ENCODE measurements at regions of chr11 and their contacts with region 1.

Region 1: GRCh38 chr11:747158-748006 is at the start of gene TALDO1:
- DNase-seq: peak; percentile 90
- ATAC-seq: peak; percentile 97
- H3K4me3 ChIP-seq: peak within 1 kb of the TSS; percentile 56 to 88 (median 73)
- H3K4me3 Mint-ChIP-seq: peak within 1 kb of the TSS; percentile 88
- H3K27ac ChIP-seq: peak within 1 kb of the TSS; percentile 31 to 77
- H3K27ac Mint-ChIP-seq: peak within 1 kb of the TSS; percentile 83
- H3K4me1 ChIP-seq: peaks cover 17 to 27% of the 10 kb centered on the region in 2 donors
- H3K4me1 Mint-ChIP-seq: peaks cover 16% of the 10 kb centered on the region
- H3K27me3 ChIP-seq: no peaks in the 10 kb centered on the region
- H3K27me3 Mint-ChIP-seq: no peaks in the 10 kb centered on the region
- CTCF ChIP-seq: no peak
- total RNA-seq, gene TALDO1: 105 and 116 TPM in 2 replicates

Region 2: GRCh38 chr11:560305-561147 is 186.9 kb before region 1 on chr11 and contains the starts of genes LMNTD2 and RASSF7:
- CTCF ChIA-PET with region 1: no interaction called
- POLR2A ChIA-PET with region 1: no interaction called
- intact Hi-C with region 1: loop called (anchors 5 kb)
- DNase-seq: peak; percentile 95
- ATAC-seq: peak; percentile 97
- H3K4me3 ChIP-seq: peak within 1 kb of the TSS; percentile 15 to 70 (median 66)
- H3K4me3 Mint-ChIP-seq: peak within 1 kb of the TSS; percentile 88
- H3K27ac ChIP-seq: peak within 1 kb of the TSS; percentile 75 to 89
- H3K27ac Mint-ChIP-seq: peak within 1 kb of the TSS; percentile 83
- H3K4me1 ChIP-seq: peaks cover 14 to 29% of the 10 kb centered on the region in 2 donors
- H3K4me1 Mint-ChIP-seq: peaks cover 16% of the 10 kb centered on the region
- H3K27me3 ChIP-seq: peaks cover 0 to 8% (median 2%) of the 10 kb centered on the region in 4 experiments
- H3K27me3 Mint-ChIP-seq: no peaks in the 10 kb centered on the region
- CTCF ChIP-seq: no peak
- total RNA-seq, gene LMNTD2: 19.7 and 21.4 TPM in 2 replicates
- total RNA-seq, gene RASSF7: 24.7 and 29.8 TPM in 2 replicates

Region 3: GRCh38 chr11:727859-728748 is 19.3 kb before region 1 on chr11:
- CTCF ChIA-PET with region 1: interaction called, 10 read pairs
- POLR2A ChIA-PET with region 1: no interaction called
- intact Hi-C with region 1: loop called (anchors 2 kb)
- DNase-seq: peak; percentile 85
- ATAC-seq: peak; percentile 85
- H3K4me3 ChIP-seq: no peak overlapping the region
- H3K4me3 Mint-ChIP-seq: no peak overlapping the region
- H3K27ac ChIP-seq: no peak overlapping the region
- H3K27ac Mint-ChIP-seq: no peak overlapping the region
- H3K4me1 ChIP-seq: peaks cover 14 to 29% of the 10 kb centered on the region in 2 donors
- H3K4me1 Mint-ChIP-seq: peaks cover 12% of the 10 kb centered on the region
- H3K27me3 ChIP-seq: peaks cover 0 to 24% (median 0%) of the 10 kb centered on the region in 4 experiments
- H3K27me3 Mint-ChIP-seq: peaks cover 4% of the 10 kb centered on the region
- CTCF ChIP-seq: peak; percentile 97

Region 4: GRCh38 chr11:777288-778255 is 30.2 kb after region 1 on chr11 and contains the start of gene GATD1:
- CTCF ChIA-PET with region 1: interaction called, 3 read pairs
- POLR2A ChIA-PET with region 1: no interaction called
- intact Hi-C with region 1: loop called (anchors 2 kb)
- DNase-seq: peak; percentile 94
- ATAC-seq: peak; percentile 89
- H3K4me3 ChIP-seq: peak within 1 kb of the TSS; percentile 18 to 80 (median 73)
- H3K4me3 Mint-ChIP-seq: peak within 1 kb of the TSS; percentile 80
- H3K27ac ChIP-seq: peak within 1 kb of the TSS; percentile 12 to 76
- H3K27ac Mint-ChIP-seq: peak within 1 kb of the TSS; percentile 63
- H3K4me1 ChIP-seq: peaks cover 12 to 24% of the 10 kb centered on the region in 2 donors
- H3K4me1 Mint-ChIP-seq: peaks cover 18% of the 10 kb centered on the region
- H3K27me3 ChIP-seq: no peaks in the 10 kb centered on the region
- H3K27me3 Mint-ChIP-seq: no peaks in the 10 kb centered on the region
- CTCF ChIP-seq: no peak
- total RNA-seq, gene GATD1: 70.0 and 80.0 TPM in 2 replicates